Activated naive CD4-positive, alpha-beta T cell treated with anti-CD3 and anti-CD28 coated beads for 36 hours (primary cell): ENCODE measurements at regions of chr19 and their contacts with region 1.

Region 1: DNA sequence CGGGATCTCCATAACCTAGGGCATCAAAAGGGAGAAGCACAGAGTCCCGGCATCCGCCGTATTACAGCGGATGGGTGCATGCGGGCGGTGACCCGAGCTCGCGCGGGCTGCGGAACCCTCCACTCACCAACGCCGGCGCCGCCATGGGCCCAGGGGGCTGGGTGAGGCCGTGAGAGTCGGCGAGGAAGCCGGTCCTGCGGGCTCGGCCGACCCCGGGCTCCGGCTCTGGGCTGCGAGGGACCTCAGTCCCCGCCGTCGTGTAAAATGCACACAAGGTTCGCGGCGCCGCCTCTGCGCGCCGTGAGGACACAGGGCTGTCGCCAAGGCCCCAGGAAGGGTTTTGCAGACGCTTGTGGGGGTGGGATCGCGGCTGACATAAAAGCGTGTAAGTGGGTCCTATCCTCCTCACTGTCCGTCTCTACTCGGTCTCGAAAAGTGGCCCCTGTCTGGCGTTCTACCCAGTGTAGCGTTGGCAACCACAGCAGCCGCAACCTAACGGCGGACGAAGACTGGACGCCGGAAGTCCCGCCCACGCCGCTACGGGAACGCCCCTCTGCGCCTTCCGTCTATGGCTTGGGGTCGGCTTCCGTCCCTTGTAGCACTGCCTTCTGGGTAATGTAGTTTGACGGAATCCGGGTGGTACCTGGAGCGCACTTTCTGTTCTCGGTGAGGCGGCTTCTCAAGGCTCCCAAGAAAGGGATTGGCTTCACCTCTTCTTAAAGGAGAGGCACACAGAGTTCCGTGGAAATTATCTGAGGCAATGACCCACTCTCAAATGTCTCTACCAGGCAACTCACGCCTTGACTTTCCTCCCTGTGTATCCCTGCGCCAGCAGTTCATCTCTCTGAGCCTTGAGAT is at the start of gene ZNF599:
- DNase-seq: peak; percentile 92
- H3K4me3 Mint-ChIP-seq: peak within 1 kb of the TSS; percentile 92
- H3K27ac Mint-ChIP-seq: peak within 1 kb of the TSS; percentile 79
- H3K4me1 Mint-ChIP-seq: peaks cover 12% of the 10 kb centered on the region
- H3K27me3 Mint-ChIP-seq: no peaks in the 10 kb centered on the region
- total RNA-seq, gene ZNF599: 2.8 to 3.3 TPM

Region 2: DNA sequence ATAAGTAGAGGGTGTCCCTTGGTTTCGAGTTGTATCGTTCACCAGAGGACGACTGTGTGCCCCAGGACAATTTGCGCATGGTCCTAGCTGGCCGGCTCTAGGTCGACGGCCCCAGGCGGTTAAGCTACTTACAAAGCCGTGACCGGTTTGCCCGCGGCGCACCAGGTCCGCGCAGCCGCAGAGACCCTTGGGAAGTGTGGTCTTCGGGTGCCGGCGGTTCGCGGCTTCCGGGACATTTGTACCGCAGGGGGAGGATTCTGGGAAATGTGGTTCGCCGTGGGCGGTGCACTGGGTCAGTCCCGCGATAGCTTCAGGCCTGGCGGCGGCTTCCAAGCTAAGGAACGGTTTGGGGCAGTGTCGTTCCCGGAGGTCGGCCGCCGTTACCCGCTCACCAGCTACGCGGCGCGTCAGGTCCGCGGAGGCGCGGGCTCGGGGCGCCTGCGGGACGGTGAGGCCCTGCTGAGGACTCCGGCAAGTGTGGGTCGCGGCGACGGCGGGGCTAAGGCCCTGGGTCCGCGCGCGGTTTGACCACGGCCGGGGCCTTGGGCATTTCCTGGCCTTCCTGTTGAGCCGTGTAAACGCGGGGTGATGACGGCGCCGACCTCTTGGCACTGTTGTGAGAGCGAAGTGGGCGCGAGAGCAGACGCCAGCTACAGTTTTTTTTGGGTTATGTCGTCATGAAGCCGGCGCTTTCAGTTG is 95.4 kb before region 1 on chr19 and contains the start of gene ZNF302:
- CTCF ChIA-PET with region 1: no interaction called
- intact Hi-C with region 1: loop called (anchors 2 kb)
- DNase-seq: peak; percentile 98
- H3K4me3 Mint-ChIP-seq: peak within 1 kb of the TSS; percentile 97
- H3K27ac Mint-ChIP-seq: peak within 1 kb of the TSS; percentile 99
- H3K4me1 Mint-ChIP-seq: peaks cover 26% of the 10 kb centered on the region
- H3K27me3 Mint-ChIP-seq: no peaks in the 10 kb centered on the region
- total RNA-seq, gene ZNF302: 13.1 to 13.6 TPM

Region 3: DNA sequence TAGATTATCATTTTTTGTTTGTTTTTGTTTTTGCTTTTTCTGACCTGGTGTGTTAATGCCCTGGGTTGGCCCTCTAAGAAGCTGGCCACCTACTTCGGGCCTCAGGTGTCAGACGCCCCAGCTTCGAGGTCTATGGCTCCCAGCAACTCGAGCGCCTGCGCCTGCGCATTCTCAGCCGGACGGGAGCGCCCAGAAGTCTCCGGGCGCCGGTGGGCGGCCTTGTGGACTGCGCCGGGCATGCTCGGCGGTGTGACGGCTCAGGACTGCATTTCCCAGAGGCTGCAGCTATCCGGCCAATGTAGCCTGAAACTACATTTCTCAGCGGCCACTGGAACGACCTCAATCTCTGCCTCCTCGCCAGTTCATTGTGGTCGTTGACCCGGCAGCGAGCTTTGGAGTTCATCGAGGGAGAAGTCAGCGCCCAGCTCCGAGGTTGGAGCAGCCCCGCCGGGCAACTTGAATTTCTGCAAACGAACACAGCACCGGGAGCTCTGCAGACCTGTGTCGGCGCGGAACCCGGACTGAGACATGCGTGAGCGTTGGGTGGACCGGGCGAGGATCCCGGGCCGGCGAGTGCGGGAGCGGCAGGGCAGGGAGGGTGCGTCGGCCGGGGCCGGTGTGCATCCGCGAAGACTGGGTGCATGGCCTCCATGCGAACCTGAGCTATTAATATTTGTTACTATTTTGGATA is 153.9 kb after region 1 on chr19 and contains the start of gene ZNF30:
- CTCF ChIA-PET with region 1: interaction called, 3 read pairs
- intact Hi-C with region 1: loop called (anchors 2 kb)
- DNase-seq: peak; percentile 93
- H3K4me3 Mint-ChIP-seq: peak within 1 kb of the TSS; percentile 89
- H3K27ac Mint-ChIP-seq: peak within 1 kb of the TSS; percentile 44
- H3K4me1 Mint-ChIP-seq: peaks cover 13% of the 10 kb centered on the region
- H3K27me3 Mint-ChIP-seq: no peaks in the 10 kb centered on the region
- total RNA-seq, gene ZNF30: 4.4 to 5.5 TPM

Region 4: DNA sequence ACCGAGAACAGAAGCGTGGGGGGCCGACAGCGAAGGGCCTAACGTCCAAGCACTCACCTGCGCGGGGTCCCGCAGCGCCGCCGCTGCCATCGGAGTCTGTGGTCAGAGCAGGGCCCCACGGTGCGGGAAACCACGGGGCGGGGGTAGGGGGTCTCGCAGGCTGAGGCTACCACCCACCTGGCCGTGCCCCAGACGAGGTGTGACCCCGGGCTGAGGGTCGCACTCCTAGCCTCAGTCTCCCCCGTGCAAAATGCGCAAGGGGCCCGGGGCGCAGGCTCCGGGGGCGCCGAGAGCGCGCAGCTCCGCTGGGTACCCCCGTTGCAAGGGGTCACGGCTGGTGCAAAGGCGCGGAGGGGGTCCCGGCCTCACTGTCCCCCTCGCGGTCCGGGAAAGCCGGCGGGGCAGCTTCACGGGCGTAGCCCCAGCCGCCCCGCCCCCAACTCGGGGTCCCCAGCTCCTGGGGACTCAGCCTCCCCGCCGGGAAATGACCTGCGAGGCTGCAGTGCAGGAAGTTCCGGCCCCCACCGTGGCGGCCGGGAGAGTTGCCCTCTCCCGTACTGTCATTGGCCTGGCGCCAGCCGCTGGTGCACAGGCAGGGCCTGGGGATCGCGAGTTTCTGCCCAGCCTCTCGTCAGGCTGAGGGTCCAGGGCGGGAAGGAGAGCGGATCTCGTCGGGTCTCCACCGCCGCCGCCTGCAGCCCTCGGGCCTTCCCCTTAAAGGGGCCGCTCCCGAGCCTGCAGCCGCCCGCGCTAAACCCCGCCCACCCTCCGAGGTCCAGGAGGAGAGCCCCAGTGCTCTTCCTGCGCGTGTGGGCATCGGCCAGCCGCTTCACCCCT is 190.9 kb after region 1 on chr19 and contains the start of gene ZNF792:
- CTCF ChIA-PET with region 1: no interaction called
- intact Hi-C with region 1: loop called (anchors 10 kb)
- DNase-seq: peak; percentile 67
- H3K4me3 Mint-ChIP-seq: peak within 1 kb of the TSS; percentile 89
- H3K27ac Mint-ChIP-seq: peak within 1 kb of the TSS; percentile 60
- H3K4me1 Mint-ChIP-seq: peaks cover 21% of the 10 kb centered on the region
- H3K27me3 Mint-ChIP-seq: no peaks in the 10 kb centered on the region
- total RNA-seq, gene ZNF792: 3.1 to 3.5 TPM